ENCODE measurements at regions of chr5 and their contacts with region 1.

Region 1: DNA sequence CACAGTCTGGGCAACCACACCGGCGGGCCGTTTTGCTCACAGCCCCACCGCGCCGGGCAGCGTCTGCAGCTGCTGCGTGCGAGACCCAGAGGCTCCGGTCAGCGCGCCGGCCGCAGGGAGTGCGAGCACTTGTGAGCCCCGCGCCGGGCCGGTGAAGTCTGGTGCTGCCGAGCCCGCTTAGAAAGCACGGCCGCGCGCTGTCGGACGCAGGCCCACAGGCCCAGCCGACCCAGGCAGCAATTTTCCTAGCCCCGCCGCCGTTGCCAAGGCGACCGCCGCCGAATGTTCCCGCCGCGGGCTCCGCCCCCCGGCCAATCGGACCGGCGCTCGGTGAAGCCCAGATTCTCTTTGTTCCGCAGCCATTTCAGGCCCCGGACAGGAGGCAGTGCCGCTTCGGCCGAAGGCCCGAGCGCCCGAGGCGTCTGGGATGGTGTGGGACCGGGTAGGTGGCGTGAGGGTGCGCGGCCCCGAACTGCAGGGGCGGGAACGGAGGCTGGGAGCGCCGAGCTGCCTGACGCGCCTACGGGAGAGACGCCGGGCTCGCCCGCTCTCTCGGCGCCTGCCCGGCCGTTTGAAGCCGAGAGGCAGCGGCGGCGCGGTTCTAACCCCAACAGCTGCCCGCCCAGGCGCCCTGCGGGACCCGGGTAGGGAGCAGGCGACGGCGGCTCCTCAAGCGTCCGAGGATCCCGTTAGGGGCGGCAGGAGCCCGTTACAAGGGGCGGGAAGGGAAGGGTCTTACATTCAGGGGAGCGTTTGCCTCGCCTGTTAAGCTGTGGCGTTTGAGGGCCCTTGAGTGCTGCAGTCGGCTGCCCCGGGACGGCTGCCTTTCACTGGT is at the start of gene TNPO1:
- DNase-seq: peak; percentile 94 to 95
- ATAC-seq: peak; percentile 94 to 98 (median 96)
- H3K4me3 ChIP-seq: peak within 1 kb of the TSS; percentile 68 to 89 (median 81)
- H3K27ac ChIP-seq: peak within 1 kb of the TSS; percentile 86 to 98 (median 96)
- H3K4me1 ChIP-seq: peaks cover 0 to 35% (median 26%) of the 10 kb centered on the region in 9 donors
- H3K27me3 ChIP-seq: no peaks in the 10 kb centered on the region
- CTCF ChIP-seq: no peak
- total RNA-seq, gene TNPO1: 55.5 to 78.0 (median 70.4) TPM

Region 2: GRCh38 chr5:72531496-72532190 is 284.9 kb before region 1 on chr5:
- intact Hi-C with region 1: loop called in 1 of 10 experiments (anchors 10 kb)
- DNase-seq: no peak
- ATAC-seq: peak in 1 of 8 donors; percentile 25
- H3K4me3 ChIP-seq: no peak overlapping the region
- H3K27ac ChIP-seq: no peak overlapping the region
- H3K4me1 ChIP-seq: peaks cover 0 to under 1% (median 0%) of the 10 kb centered on the region in 9 donors
- H3K27me3 ChIP-seq: no peaks in the 10 kb centered on the region
- CTCF ChIP-seq: no peak

Region 3: GRCh38 chr5:72597456-72597948 is 219.0 kb before region 1 on chr5:
- intact Hi-C with region 1: loop called in 1 of 10 experiments (anchors 10 kb)
- DNase-seq: peak in 1 of 2 donors; percentile 15
- ATAC-seq: peak in 7 of 8 donors; percentile 44 to 80 (median 67)
- H3K4me3 ChIP-seq: no peak overlapping the region
- H3K27ac ChIP-seq: peak overlapping the region in 5 of 10 donors; percentile 21 to 75 (median 45)
- H3K4me1 ChIP-seq: peaks cover 0 to 46% (median 18%) of the 10 kb centered on the region in 9 donors
- H3K27me3 ChIP-seq: no peaks in the 10 kb centered on the region
- CTCF ChIP-seq: no peak

Region 4: DNA sequence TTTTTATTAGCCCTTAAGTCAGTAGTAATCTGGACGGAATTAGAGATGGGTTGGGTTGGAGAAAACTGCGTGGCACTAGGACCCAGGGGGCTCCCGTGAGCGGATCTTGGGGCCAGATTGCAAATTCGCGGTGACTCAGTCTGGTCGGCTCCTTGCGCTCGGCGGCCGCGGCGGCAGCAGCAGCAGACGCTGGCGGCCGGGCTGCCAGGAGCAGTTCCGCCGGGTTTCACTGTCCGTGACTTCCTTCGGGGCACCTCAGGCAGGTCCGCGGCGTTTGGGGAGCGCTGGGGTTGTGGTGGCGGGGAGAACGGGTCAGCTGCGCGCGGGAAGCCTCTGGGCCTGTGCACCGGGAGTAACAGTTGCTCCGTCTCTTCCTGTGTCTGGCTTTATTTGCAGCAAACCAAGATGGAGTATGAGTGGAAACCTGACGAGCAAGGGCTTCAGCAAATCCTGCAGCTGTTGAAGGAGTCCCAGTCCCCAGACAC is 31.5 kb after region 1 on chr5:
- intact Hi-C with region 1: loop called in 4 of 10 experiments (anchors 2 to 5 kb)
- DNase-seq: peak; percentile 86 to 90
- ATAC-seq: peak; percentile 95 to 97 (median 96)
- H3K4me3 ChIP-seq: peak overlapping the region; percentile 64 to 92 (median 82)
- H3K27ac ChIP-seq: peak overlapping the region; percentile 80 to 96 (median 93)
- H3K4me1 ChIP-seq: peaks cover 0 to 81% (median 59%) of the 10 kb centered on the region in 9 donors
- H3K27me3 ChIP-seq: no peaks in the 10 kb centered on the region
- CTCF ChIP-seq: peak in 4 of 9 donors; percentile 13 to 28 (median 14)

Measured in heart right ventricle (tissue), 16 donors.